ENCODE measurements at regions of chr4 and their contacts with region 1.

Region 1: DNA sequence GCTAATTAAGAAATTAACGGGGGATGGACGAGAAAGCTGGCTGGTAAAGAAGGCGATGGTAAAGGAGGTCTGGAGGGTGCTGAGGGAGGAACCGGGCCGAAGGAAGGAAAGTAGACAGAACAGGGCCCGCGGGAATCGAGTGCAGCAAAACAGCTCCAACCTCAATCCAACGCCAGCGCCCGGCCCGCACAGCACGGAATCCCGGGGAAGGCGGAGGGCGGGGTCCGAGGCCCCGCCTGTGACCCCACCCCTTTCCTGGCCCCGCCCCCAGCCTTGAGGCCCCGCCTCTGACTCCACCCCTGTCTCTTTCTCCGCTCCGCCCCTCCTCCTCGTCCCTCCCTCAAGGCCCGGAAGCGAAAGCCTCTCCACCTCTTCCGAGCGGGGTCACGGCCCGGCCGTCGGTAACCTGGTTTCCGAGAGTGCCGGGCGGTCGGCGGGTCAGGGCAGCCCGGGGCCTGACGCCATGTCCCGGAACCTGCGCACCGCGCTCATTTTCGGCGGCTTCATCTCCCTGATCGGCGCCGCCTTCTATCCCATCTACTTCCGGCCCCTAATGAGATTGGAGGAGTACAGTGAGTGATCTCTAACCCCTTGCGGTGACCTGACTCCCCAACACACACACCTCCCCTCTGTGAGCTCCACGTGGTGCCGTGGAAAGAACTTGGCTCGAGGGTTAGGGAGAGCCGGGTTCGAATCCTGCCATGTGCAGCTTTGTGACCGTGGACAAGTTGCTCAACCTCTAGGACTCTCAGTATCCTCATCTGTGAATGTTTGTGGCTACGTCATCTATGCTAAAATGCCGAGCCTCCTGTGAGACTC is at the start of gene SMIM20:
- DNase-seq: peak; percentile 94
- ATAC-seq: peak; percentile 96
- H3K4me3 Mint-ChIP-seq: peak within 1 kb of the TSS; percentile 93
- H3K27ac Mint-ChIP-seq: peak within 1 kb of the TSS; percentile 93
- H3K4me1 Mint-ChIP-seq: peaks cover 22% of the 10 kb centered on the region
- H3K27me3 Mint-ChIP-seq: no peaks in the 10 kb centered on the region
- total RNA-seq, gene SMIM20: 15.6 to 23.0 TPM

Region 2: GRCh38 chr4:25159884-25160713 is 754.0 kb before region 1 on chr4 and contains the start of gene SEPSECS:
- CTCF ChIA-PET with region 1: no interaction called
- POLR2A ChIA-PET with region 1: no interaction called
- intact Hi-C with region 1: loop called in 1 of 2 experiments (anchors 5 kb)
- DNase-seq: peak; percentile 96
- ATAC-seq: peak; percentile 90
- H3K4me3 Mint-ChIP-seq: peak within 1 kb of the TSS; percentile 85
- H3K27ac Mint-ChIP-seq: peak within 1 kb of the TSS; percentile 91
- H3K4me1 Mint-ChIP-seq: peaks cover 37% of the 10 kb centered on the region
- H3K27me3 Mint-ChIP-seq: no peaks in the 10 kb centered on the region
- total RNA-seq, gene SEPSECS: 10.4 to 15.4 TPM

Region 3: DNA sequence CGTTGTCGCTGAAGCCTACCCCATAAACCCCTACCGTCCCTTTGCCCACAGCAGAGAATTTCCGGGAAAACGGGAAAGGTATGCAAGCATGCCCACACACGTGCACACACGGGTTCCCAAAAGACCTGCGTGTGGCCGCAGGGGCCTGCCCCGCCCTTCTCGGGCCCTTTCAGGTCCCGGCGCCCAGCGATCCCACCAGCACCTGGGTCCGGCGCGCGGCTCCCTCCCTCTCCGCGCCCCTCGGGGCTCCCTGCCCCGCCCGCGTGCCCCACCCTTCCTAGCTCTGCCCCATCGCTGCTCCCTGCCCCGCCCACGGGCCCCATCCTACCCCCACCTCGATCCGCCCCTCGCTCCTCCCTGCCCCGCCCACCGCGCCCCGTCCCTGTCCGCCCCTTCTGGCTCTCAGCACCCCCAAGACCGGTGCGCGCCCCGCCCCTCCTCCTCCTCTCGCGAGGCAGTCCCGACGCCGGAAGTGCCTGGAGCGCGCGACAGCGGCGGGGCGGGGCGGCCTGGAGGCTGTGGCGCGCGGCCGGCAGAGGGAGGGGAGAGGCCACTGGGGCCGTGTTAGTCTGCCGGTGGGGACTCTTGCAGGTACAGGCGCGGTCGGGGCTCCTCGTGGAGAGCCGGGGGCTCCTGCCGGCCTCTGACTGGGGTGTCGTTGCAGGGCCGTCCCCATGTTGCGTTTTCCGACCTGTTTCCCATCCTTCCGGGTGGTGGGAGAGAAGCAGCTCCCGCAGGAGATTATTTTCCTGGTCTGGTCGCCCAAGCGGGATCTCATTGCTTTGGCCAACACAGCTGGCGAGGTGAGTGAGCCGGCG is 537.1 kb before region 1 on chr4 and contains the start of gene ANAPC4:
- CTCF ChIA-PET with region 1: no interaction called
- POLR2A ChIA-PET with region 1: no interaction called
- intact Hi-C with region 1: loop called in 1 of 2 experiments (anchors 1 kb)
- DNase-seq: peak; percentile 99
- ATAC-seq: peak; percentile 98
- H3K4me3 Mint-ChIP-seq: no peak within 1 kb of the TSS
- H3K27ac Mint-ChIP-seq: peak within 1 kb of the TSS; percentile 74
- H3K4me1 Mint-ChIP-seq: peaks cover 8% of the 10 kb centered on the region
- H3K27me3 Mint-ChIP-seq: no peaks in the 10 kb centered on the region
- total RNA-seq, gene ANAPC4: 19.2 to 31.2 TPM

Region 4: DNA sequence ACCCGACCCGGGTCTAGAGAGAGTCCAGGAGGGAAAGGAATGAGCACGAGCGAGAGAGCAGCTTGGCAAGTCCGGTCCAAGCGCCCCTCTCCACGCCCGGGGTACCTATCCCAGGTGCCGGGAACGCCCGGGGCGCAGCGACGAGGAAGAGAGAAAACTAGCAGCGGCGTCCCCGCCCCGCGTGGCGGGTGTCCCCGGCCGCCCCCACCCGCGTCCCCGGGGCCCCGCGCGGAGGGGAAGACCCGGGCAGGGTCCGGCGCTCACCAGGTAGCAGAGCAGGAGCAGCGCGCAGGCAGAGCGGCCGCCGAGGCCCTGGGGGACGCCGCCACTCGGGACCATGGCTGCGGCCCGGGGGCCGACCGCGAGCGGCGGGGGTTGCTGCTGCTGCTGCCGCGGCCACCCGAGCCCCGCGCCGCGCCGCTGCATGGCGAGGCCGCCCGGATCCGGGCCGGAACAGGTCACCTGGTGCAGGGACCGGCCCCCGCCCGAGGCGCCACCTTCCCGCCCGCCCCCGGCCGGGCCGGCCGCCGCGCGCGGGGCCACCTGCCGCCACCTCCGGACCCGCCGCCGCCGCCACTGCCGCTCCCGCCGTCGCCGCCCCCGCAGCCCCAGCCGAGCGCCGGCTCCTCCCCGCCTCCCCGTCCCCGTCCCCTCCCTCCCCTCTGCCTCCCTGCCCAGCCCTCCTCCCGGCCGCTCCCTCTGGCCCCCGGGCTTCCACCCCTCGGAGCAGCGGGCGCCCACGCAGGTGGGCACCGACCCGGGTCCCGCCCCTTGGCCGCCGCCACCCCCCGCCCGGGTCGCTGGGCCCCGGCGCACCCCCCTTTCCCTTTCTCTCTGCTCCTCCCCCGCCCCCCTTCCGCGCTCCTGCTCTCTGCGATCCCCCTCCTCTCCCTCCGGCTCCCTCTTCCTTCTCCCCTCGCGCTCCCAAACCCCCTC is 51.4 kb before region 1 on chr4 and contains the start of gene SEL1L3:
- CTCF ChIA-PET with region 1: interaction called, 5 read pairs
- POLR2A ChIA-PET with region 1: no interaction called
- intact Hi-C with region 1: loop called (anchors 1 to 2 kb)
- DNase-seq: peak; percentile 79
- ATAC-seq: peak; percentile 33
- H3K4me3 Mint-ChIP-seq: peak within 1 kb of the TSS; percentile 94
- H3K27ac Mint-ChIP-seq: peak within 1 kb of the TSS; percentile 96
- H3K4me1 Mint-ChIP-seq: peaks cover 40% of the 10 kb centered on the region
- H3K27me3 Mint-ChIP-seq: no peaks in the 10 kb centered on the region
- total RNA-seq, gene SEL1L3: 31.9 to 34.8 TPM

Region 5: DNA sequence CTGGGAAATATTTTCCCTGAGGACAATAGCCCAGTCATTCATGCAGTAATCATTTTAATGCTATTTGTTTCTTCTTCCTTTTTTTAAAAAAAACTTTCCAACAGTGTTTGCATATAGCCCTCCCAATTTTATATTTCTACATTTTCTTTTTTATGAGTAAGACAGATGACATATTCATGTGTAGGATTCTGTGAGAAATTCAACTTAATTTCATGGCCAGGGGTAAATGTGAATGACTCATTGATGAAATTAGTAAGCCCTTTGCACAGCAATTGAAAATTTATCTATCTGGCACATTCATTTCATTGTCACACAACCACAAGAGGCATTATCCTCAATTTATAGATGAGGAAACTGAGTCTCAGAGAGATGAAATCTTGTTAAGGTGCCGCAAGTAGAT is 13.8 kb before region 1 on chr4:
- CTCF ChIA-PET with region 1: no interaction called
- POLR2A ChIA-PET with region 1: no interaction called
- intact Hi-C with region 1: no loop called
- DNase-seq: no peak
- ATAC-seq: peak; percentile 58
- H3K4me3 Mint-ChIP-seq: no peak overlapping the region
- H3K27ac Mint-ChIP-seq: no peak overlapping the region
- H3K4me1 Mint-ChIP-seq: peaks cover 9% of the 10 kb centered on the region
- H3K27me3 Mint-ChIP-seq: peaks cover 2% of the 10 kb centered on the region

Region 6: DNA sequence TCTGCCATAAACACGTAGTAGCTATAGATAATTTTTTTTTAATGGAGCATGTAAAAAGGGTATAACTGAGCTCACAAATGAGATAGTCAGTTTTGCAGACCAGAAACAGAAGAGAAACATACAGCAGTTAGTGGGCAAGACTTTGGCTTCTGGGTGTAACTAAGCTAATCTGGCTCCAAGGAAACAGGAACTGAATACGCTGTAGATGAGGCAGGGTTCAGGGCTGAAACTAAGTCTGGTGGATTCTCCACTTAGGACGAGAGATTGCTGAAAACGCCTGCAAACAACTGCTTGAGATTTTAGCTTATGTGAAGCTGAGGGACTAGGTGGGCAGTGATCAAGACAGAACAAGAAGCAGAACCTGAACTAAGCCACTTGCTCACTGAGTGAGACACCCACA is 91.7 kb after region 1 on chr4:
- CTCF ChIA-PET with region 1: no interaction called
- POLR2A ChIA-PET with region 1: no interaction called
- intact Hi-C with region 1: no loop called
- DNase-seq: no peak
- ATAC-seq: no peak
- H3K4me3 Mint-ChIP-seq: no peak overlapping the region
- H3K27ac Mint-ChIP-seq: no peak overlapping the region
- H3K4me1 Mint-ChIP-seq: no peaks in the 10 kb centered on the region
- H3K27me3 Mint-ChIP-seq: peaks cover 13% of the 10 kb centered on the region

Region 7: GRCh38 chr4:26583865-26584652 is 670.0 kb after region 1 on chr4 and contains the start of gene TBC1D19:
- CTCF ChIA-PET with region 1: no interaction called
- POLR2A ChIA-PET with region 1: no interaction called
- intact Hi-C with region 1: loop called in 1 of 2 experiments (anchors 2 kb)
- DNase-seq: peak; percentile 93
- ATAC-seq: peak; percentile 96
- H3K4me3 Mint-ChIP-seq: peak within 1 kb of the TSS; percentile 93
- H3K27ac Mint-ChIP-seq: peak within 1 kb of the TSS; percentile 92
- H3K4me1 Mint-ChIP-seq: peaks cover 24% of the 10 kb centered on the region
- H3K27me3 Mint-ChIP-seq: peaks cover 1% of the 10 kb centered on the region
- total RNA-seq, gene TBC1D19: 5.0 to 5.3 TPM

Measured in activated CD4-positive, alpha-beta T cell treated with anti-CD3 and anti-CD28 coated beads for 36 hours (primary cell).